ENCODE measurements at regions of chr12 and their contacts with region 1.

Region 1: GRCh38 chr12:15220994-15221885 is at the start of gene RERG:
- ATAC-seq: peak; percentile 97 to 100 (median 99)
- H3K4me3 ChIP-seq: peak within 1 kb of the TSS; percentile 26 to 51 (median 34)
- H3K27ac ChIP-seq: no peak within 1 kb of the TSS
- H3K4me1 ChIP-seq: peaks cover 8 to 10% of the 10 kb centered on the region in 2 donors
- total RNA-seq, gene RERG: 0.18 to 23.5 (median 1.7) TPM

Region 2: DNA sequence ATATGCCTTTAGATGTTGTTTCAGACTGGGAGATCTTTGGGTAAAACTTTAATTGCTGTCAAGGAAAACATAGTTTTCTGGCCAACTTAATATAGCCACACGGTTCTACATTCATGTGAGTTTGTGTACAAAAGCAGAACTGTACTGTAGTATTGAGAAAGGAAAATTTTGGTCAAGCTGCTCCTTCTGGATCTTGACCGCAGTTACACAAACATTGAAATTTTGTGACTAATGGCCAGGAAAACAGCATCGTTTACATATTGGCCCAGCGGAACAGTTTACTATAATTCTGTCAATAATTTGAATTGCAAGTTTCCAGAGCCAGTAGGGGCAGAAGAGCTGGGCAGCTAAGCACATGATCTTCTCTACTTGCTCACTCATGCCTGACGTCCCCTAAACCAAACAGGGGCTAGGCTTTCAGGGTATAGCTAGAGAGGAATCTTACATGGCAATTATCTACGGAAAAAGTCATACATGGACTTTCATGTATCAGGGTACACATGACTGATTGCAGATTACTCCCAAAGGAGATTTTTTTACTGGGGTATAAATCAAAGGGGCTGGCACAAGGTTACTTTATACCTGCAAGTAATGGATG is 366.6 kb before region 1 on chr12:
- in situ Hi-C with region 1: loop called in 5 of 9 experiments (anchors 25 kb)
- ATAC-seq: peak in 5 of 8 experiments; percentile 37 to 94 (median 52)
- H3K4me3 ChIP-seq: no peak overlapping the region
- H3K27ac ChIP-seq: no peak overlapping the region
- H3K4me1 ChIP-seq: peaks cover 0 to 11% of the 10 kb centered on the region in 2 donors

Measured in motor neuron (in vitro differentiated cells).